H1 (cell line): ENCODE measurements at regions of chr6 and their contacts with region 1.

Region 1: DNA sequence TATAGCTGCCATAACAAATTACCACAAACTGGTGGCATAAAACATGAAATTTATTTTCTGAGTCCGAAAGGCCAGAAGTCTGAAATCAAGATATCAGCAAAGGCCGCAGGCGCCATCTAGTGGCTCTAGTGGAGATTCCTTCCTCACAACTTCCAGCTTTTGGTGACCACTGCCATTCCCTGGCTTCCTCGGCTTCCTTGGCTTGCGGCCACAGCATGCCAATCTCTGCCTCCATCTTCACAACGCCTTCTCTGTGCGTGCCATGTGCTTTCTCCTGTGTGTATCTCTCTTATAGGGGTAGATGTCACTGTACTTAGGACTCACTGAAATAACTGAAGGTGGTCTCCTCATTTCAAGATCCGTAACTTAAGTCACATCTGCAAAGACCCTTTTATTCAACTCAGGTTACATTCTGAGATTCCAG is 5.4 kb upstream of the PLAGL1 start:
- DNase-seq: peak in 1 of 2 experiments; percentile 77
- H3K4me3 ChIP-seq: no peak overlapping the region
- H3K27ac ChIP-seq: no peak overlapping the region
- H3K4me1 ChIP-seq: 0 out of 7 replicates have a peak, but pooled peaks cover 0 to 2% (median 0%) of the 10 kb centered on the region in 4 experiments
- H3K27me3 ChIP-seq: peaks cover 0 to 13% (median 10%) of the 10 kb centered on the region in 4 experiments; a peak in 6 of 7 replicates
- CTCF ChIP-seq: peak; percentile 58 to 97 (median 90)
- EP300 ChIP-seq: no peak
- POLR2A ChIP-seq: no peak
- RAD21 ChIP-seq: peak; percentile 97 to 98

Region 2: DNA sequence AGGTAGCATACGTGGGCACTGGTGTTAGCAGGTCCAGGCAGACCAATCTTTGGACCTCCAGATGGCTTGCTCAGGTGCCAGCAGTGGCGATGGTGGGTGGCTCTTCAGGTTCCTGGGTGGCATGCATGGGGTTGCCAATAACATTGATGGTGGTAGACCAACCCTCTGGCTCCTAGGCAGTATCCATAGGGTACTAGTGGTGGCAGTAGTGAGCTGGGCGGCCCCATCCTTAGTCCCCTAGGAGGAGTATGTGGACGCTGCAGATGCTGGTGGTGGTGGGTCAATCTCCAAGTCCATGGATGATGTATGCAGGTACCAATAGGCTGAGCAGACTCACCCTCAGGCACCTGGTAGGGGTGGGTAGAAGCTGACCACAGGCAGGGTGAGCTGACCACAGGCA is 78.6 kb before region 1 on chr6:
- CTCF ChIA-PET with region 1: interaction called, 366 read pairs
- POLR2A ChIA-PET with region 1: interaction called, 3 read pairs
- DNase-seq: no peak
- H3K4me3 ChIP-seq: no peak overlapping the region
- H3K27ac ChIP-seq: no peak overlapping the region
- H3K4me1 ChIP-seq: peaks cover 0 to 15% (median 4%) of the 10 kb centered on the region in 4 experiments; a peak in 4 of 7 replicates
- H3K27me3 ChIP-seq: no peaks in the 10 kb centered on the region; a peak in 1 of 7 replicates
- CTCF ChIP-seq: peak; percentile 36 to 55 (median 36)
- EP300 ChIP-seq: no peak
- POLR2A ChIP-seq: no peak
- RAD21 ChIP-seq: 0 out of 4 replicates have a peak, but pooled peaks have one; percentile 3 to 14

Region 3: GRCh38 chr6:143961886-143962873 is 51.3 kb before region 1 on chr6:
- CTCF ChIA-PET with region 1: interaction called, 63 read pairs
- POLR2A ChIA-PET with region 1: interaction called, 3 read pairs
- DNase-seq: no peak
- H3K4me3 ChIP-seq: peak overlapping the region in 1 of 4 experiments; percentile 33; a peak in 3 of 8 replicates
- H3K27ac ChIP-seq: no peak overlapping the region
- H3K4me1 ChIP-seq: peaks cover 21 to 72% (median 47%) of the 10 kb centered on the region in 4 experiments
- H3K27me3 ChIP-seq: peaks cover 67 to 98% (median 89%) of the 10 kb centered on the region in 4 experiments
- CTCF ChIP-seq: peak in 2 of 3 experiments; percentile 41 to 49; a peak in 3 of 4 replicates
- EP300 ChIP-seq: no peak
- POLR2A ChIP-seq: no peak
- RAD21 ChIP-seq: peak in 1 of 2 experiments; percentile 43; a peak in 2 of 4 replicates

Region 4: DNA sequence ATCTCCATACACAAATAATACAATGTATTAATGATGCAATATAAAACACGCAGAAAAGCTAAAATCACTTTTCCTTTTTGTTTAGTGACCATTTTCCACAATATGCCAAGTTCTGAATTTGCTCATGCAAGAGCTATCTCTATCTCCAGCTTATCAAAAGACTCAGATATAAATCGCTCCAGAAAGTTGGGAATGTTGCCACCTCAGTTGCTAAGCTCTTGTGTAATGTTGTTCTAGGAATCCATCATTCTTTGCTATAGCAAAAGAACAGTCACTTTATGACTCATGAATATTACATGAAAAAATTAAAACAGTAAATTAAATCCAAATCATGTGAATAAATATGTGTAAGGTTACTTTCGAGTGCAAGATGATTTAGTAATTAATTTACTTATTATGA is 14.1 kb before region 1 on chr6:
- CTCF ChIA-PET with region 1: interaction called, 10 read pairs
- POLR2A ChIA-PET with region 1: no interaction called
- DNase-seq: no peak
- H3K4me3 ChIP-seq: no peak overlapping the region
- H3K27ac ChIP-seq: no peak overlapping the region
- H3K4me1 ChIP-seq: no peaks in the 10 kb centered on the region
- H3K27me3 ChIP-seq: no peaks in the 10 kb centered on the region; a peak in 1 of 7 replicates
- CTCF ChIP-seq: no peak
- EP300 ChIP-seq: no peak
- POLR2A ChIP-seq: no peak
- RAD21 ChIP-seq: no peak